ENCODE measurements at regions of chr1 and their contacts with region 1.

Region 1: DNA sequence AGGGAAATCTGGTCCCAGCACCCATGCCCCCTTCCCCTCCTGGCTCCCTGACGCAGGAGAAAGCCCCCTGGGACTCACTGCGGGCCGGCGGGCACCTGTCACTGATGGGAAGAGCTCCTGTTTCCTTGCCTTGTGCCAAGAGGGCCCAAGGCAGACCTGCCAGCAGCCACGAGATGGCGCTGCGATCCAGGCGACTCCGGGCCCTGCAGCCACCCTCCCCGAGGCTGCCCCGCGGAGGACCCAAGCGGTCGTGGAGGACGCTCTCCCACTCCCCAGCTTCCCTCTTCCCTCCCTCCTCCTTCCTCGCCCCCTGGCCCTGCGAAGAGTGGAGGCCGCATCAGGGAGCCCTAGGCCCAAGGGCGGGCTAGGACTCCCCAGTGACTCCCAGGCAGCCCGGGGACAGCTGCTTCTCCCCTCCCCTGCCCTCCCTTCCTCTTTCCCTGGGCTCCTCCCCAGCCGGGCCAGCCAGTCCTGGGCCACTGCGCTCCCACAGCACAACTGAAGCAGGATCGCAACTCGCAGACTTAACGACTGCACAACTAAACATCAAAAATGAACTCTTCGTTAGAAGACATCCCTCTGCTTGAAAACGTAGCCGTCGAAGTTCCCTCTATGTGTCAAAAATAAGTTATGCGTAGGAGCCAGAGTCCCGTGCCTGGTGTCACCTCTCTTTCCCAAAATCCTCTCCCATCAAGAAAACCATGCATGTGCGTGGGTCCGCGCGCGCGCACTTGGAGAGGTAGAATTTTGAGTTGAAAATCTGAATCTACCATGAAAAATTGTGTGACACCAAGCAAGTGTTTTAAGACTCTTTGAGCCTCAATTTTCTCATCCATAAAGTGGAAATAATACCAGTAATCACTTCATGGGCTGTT is 34.2 kb downstream of the BATF3 start:
- DNase-seq: peak; percentile 34 to 96 (median 70)

Region 2: DNA sequence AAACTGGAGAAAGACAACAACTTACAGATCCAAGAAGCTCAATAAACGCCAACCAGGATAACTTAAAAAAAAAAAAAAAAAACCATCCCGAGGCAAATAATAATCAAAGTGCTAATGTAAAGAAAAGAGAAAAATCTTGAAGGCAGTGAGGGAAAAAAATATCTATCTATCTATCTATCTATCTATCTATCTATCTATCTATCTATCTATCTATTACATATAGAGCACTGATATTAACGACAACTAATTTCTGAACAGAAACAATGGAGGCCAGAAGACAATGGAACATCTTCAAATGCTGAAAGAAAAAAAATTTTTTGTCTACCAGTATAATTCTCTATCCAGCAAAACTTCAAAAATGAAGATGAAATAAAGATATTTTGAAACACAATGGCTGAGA is 268.8 kb before region 1 on chr1:
- intact Hi-C with region 1: no loop called
- DNase-seq: no peak

Region 3: GRCh38 chr1:212782422-212783154 is 117.1 kb after region 1 on chr1:
- intact Hi-C with region 1: loop called (anchors 1 kb)
- DNase-seq: no peak

Measured in posterior cingulate gyrus (tissue), 11 donors.